Ascending aorta (tissue), 2 donors: ENCODE measurements at regions of chr4 and their contacts with region 1.

Region 1: GRCh38 chr4:76949276-76950051 is at the start of gene SEPTIN11:
- DNase-seq: peak; percentile 73 to 97
- H3K4me3 ChIP-seq: peak within 1 kb of the TSS; percentile 59 to 77
- H3K27ac ChIP-seq: peak within 1 kb of the TSS; percentile 90 to 95
- H3K4me1 ChIP-seq: peaks cover 4 to 30% of the 10 kb centered on the region in 2 donors
- H3K27me3 ChIP-seq: no peaks in the 10 kb centered on the region
- CTCF ChIP-seq: no peak
- total RNA-seq, gene SEPTIN11: 48.0 TPM

Region 2: GRCh38 chr4:76515975-76516843 is 433.3 kb before region 1 on chr4:
- intact Hi-C with region 1: loop called (anchors 10 kb)
- DNase-seq: no peak
- H3K4me3 ChIP-seq: no peak overlapping the region
- H3K27ac ChIP-seq: no peak overlapping the region
- H3K4me1 ChIP-seq: peaks cover 0 to 2% of the 10 kb centered on the region in 2 donors
- H3K27me3 ChIP-seq: no peaks in the 10 kb centered on the region
- CTCF ChIP-seq: no peak

Region 3: GRCh38 chr4:76677571-76678326 is 271.7 kb before region 1 on chr4:
- intact Hi-C with region 1: no loop called
- DNase-seq: no peak
- H3K4me3 ChIP-seq: peak overlapping the region in 1 of 2 donors; percentile 30
- H3K27ac ChIP-seq: peak overlapping the region; percentile 91 to 93
- H3K4me1 ChIP-seq: peaks cover 15 to 23% of the 10 kb centered on the region in 2 donors
- H3K27me3 ChIP-seq: no peaks in the 10 kb centered on the region
- CTCF ChIP-seq: no peak

Region 4: DNA sequence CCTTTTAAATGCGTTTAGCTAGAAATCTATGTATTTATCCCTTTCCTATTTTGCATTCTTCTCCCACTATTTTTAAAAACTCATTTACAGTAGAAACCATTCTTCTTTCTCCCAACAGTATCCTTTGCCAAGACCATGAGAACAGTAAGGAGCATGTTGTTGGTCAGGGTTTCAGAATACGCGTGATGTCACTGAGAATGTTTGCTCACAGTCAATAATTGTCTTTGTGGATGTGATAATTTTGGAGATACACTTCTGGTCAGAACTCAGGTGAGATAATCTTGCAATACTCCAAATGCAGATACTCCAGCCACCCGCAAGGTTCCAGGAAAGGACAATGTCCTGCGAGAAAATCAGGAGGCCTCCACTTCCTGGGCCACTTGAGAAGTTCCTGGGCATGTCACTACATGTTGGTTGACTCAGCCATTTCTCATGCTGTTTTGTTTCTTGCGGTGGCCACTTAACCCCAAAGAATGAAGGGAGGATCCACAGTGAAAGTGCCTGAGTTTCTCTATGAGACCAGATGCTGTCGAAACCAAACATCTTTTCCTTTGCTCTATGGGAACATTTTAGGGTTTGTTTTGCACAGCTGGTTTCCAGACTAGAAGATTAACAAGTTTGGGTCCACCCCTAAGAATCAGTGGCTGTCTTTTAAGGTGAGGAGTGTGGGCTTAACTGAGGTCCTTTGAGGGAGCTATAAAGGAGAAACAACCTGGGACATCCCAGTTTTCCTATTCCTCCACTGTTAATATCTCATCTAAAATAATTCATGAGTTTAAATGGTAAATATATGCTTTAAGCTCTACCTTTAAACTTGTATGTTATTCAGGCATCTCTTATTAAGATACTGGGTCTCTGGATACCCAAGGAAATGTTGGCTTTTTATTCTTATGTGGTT is 167.5 kb before region 1 on chr4:
- intact Hi-C with region 1: loop called (anchors 5 kb)
- DNase-seq: no peak
- H3K4me3 ChIP-seq: no peak overlapping the region
- H3K27ac ChIP-seq: no peak overlapping the region
- H3K4me1 ChIP-seq: no peaks in the 10 kb centered on the region
- H3K27me3 ChIP-seq: no peaks in the 10 kb centered on the region
- CTCF ChIP-seq: no peak

Region 5: DNA sequence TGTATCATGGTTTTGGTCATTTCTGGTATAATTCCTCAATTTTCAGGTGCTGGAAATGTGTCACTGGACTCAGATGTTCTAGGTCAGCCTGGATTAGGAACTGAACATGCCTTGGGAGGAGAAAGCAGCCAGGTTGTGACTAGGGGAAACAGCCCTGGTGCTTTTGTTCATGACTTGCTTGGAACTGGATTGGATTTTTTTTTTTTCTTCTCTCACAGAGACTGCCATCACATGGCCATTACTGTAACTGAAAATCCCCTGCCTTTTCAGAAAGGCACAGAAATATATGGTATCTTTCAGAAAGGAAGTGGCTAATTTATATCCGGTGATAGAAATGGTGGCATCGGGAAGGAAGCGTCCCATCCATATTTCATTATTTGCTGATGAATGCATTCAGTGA is 34.7 kb after region 1 on chr4:
- intact Hi-C with region 1: loop called (anchors 1 kb)
- DNase-seq: no peak
- H3K4me3 ChIP-seq: no peak overlapping the region
- H3K27ac ChIP-seq: peak overlapping the region; percentile 59 to 64
- H3K4me1 ChIP-seq: peaks cover 4 to 38% of the 10 kb centered on the region in 2 donors
- H3K27me3 ChIP-seq: no peaks in the 10 kb centered on the region
- CTCF ChIP-seq: peak in 2 of 3 experiments; percentile 23 to 41

Region 6: DNA sequence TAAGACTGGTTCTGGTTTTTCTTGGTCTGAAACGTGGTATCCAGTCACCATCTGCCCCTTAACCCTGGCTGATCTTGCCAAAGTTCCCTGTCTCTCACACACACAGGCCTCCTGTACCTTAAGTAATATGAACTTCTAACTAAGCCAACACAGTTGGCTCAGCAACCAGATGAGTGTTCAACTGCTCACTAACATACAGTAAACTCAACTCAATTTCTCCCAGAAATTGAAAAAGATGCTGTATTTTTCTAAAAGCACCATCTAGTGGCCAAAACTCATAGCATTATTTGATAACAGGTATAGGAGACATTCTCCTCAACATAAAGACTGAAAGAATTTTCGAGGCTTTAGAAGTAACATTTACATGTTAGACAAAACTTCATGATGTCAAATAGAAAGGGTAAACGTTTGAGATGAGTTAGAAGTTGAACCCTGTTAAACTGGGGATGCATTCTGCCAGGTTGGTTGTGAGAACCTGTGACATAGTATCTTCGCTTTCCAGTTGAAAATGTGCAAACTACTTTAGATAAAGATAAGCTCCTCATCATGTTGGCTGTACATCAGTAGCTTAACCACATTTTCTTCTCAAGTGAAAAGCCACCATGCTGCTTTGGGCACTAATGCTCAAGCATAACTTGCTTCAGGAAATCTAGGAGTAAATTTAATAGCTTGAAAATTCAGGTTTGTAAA is 95.1 kb after region 1 on chr4:
- intact Hi-C with region 1: loop called (anchors 2 kb)
- DNase-seq: no peak
- H3K4me3 ChIP-seq: no peak overlapping the region
- H3K27ac ChIP-seq: peak overlapping the region; percentile 31 to 55
- H3K4me1 ChIP-seq: peaks cover 0 to 11% of the 10 kb centered on the region in 2 donors
- H3K27me3 ChIP-seq: no peaks in the 10 kb centered on the region
- CTCF ChIP-seq: peak; percentile 32 to 56 (median 46)

Region 7: GRCh38 chr4:77072195-77072753 is 122.8 kb after region 1 on chr4:
- intact Hi-C with region 1: no loop called
- DNase-seq: no peak
- H3K4me3 ChIP-seq: peak overlapping the region; percentile 88 to 97
- H3K27ac ChIP-seq: peak overlapping the region in 1 of 2 donors; percentile 15
- H3K4me1 ChIP-seq: peaks cover 4 to 10% of the 10 kb centered on the region in 2 donors
- H3K27me3 ChIP-seq: no peaks in the 10 kb centered on the region
- CTCF ChIP-seq: no peak

Region 8: DNA sequence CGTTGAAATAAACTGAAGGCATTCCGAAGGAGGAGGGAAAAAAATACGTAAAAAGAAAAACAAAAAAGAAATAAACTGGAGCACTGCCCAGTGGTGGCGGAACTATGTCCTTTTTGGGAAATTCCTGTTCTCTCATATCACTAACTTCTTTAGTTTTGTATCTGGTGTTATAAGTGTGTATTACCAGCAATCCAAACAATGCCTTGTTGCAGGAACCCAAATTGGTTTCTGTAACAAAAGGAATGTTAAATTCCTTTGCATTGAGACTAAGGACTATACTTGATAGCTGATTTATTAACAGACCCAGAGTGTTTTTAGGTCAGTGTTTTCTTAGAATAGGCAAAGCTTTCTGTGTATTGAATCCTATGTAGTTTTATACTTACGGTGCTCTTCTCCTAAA is 214.2 kb after region 1 on chr4:
- intact Hi-C with region 1: loop called (anchors 2 kb)
- DNase-seq: no peak
- H3K4me3 ChIP-seq: no peak overlapping the region
- H3K27ac ChIP-seq: peak overlapping the region in 1 of 2 donors; percentile 8
- H3K4me1 ChIP-seq: peaks cover 0 to 6% of the 10 kb centered on the region in 2 donors
- H3K27me3 ChIP-seq: no peaks in the 10 kb centered on the region
- CTCF ChIP-seq: no peak